OCI-LY7 (cell line): ENCODE measurements at regions of chr14 and their contacts with region 1.

Region 1: DNA sequence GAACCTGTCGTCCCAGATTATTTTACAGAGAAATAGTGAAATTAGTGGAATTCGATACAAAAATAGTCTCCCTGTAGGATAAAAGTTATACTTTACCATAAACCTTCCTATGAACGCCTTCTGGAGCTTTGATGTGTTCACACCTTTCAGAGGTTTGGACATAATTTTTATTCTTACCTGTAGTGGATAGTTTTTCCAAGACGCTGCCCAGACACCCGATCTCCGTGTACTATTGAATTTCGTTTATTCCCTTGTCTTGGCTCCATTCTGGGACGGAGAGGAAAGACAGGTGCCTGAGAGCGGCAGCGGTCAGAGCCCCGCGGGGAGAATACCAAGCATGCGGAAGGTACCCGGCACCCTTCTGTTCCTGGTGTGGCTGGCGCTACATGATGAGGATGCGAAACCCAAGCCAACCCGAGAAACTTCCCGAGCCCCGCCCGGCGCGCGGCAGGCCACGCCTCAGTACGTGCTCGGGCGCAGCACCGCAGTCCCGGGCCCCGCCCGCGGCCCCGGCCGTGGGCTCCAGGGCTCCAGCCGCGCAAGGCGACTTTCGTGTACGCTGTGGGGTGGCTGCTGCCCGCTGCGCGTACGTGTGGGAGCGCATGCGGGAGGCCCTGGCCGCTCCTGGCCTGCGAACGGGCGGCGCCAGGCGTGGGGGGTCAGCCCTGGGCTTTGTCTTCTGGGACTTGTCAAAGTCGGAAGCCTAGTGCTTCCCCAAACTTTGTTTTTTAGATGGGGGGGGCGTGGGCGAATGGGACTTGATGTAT is 11.3 kb upstream of the SNAPC1 start:
- DNase-seq: peak; percentile 92
- H3K4me3 ChIP-seq: peak overlapping the region; percentile 69
- H3K27ac ChIP-seq: peak overlapping the region; percentile 26
- H3K4me1 ChIP-seq: peaks cover 65% of the 10 kb centered on the region
- CTCF ChIP-seq: no peak

Region 2: GRCh38 chr14:61719344-61720293 is 31.3 kb before region 1 on chr14:
- CTCF ChIA-PET with region 1: no interaction called
- POLR2A ChIA-PET with region 1: interaction called, 15 read pairs
- intact Hi-C with region 1: no loop called
- DNase-seq: peak; percentile 63
- H3K4me3 ChIP-seq: peak overlapping the region; percentile 62
- H3K27ac ChIP-seq: peak overlapping the region; percentile 88
- H3K4me1 ChIP-seq: peaks cover 68% of the 10 kb centered on the region
- CTCF ChIP-seq: no peak

Region 3: GRCh38 chr14:61730756-61731373 is 20.0 kb before region 1 on chr14:
- CTCF ChIA-PET with region 1: interaction called, 3 read pairs
- POLR2A ChIA-PET with region 1: interaction called, 15 read pairs
- intact Hi-C with region 1: no loop called
- DNase-seq: peak; percentile 46
- H3K4me3 ChIP-seq: no peak overlapping the region
- H3K27ac ChIP-seq: peak overlapping the region; percentile 21
- H3K4me1 ChIP-seq: peaks cover 22% of the 10 kb centered on the region
- CTCF ChIP-seq: peak; percentile 93

Region 4: GRCh38 chr14:61737915-61738314 is 13.0 kb before region 1 on chr14:
- CTCF ChIA-PET with region 1: no interaction called
- POLR2A ChIA-PET with region 1: interaction called, 24 read pairs
- intact Hi-C with region 1: no loop called
- DNase-seq: no peak
- H3K4me3 ChIP-seq: no peak overlapping the region
- H3K27ac ChIP-seq: no peak overlapping the region
- H3K4me1 ChIP-seq: peaks cover 8% of the 10 kb centered on the region
- CTCF ChIP-seq: no peak

Region 5: GRCh38 chr14:61761959-61762786 is 11.3 kb after region 1 on chr14 and contains the start of gene SNAPC1:
- CTCF ChIA-PET with region 1: interaction called, 4 read pairs
- POLR2A ChIA-PET with region 1: interaction called, 55 read pairs
- intact Hi-C with region 1: no loop called
- DNase-seq: peak; percentile 100
- H3K4me3 ChIP-seq: peak within 1 kb of the TSS; percentile 92
- H3K27ac ChIP-seq: peak within 1 kb of the TSS; percentile 74
- H3K4me1 ChIP-seq: peaks cover 36% of the 10 kb centered on the region
- CTCF ChIP-seq: no peak
- total RNA-seq, gene SNAPC1: 10.5 and 11.7 TPM in 2 replicates

Region 6: DNA sequence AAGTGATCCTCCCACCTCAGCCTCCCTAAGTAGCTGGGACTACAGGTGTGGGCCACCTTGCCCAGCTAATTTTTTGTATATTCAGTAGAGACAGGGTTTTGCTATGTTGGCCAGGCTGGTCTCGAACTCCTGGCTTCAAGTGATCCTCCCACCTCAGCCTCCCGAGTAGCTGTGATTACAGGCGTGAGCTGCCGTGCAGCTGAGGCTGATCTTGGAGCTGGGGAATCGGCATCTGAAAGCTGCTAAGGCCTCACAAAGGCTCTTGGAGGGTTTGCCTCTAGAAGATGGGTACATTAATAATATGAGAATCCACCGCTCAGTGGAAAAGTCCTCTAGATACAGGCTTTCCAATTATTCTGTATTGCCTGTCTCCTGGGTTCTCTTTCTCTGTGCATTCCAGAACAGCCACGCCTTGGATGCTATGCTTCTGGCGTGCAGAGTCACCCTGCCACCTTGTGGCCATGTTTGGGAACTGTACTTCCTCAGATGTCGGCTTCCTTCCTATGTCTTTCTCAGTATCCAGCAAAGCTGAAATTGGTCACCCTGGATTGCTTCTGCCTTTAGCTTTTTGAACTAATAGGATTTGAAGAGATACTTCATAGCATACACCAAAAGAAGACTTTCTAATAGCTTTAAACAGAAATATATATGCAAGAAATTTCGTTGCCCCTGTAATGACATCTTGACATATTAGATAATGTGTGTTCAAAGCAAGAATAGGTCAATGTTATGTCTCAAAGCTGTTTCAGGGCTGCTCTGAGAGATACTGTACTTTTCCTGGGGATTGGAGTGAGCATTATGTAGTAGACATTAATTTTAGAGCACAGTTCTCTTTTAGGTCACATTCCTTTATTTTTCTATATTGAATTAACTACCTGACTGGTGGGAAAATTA is 86.7 kb after region 1 on chr14:
- CTCF ChIA-PET with region 1: interaction called, 3 read pairs
- POLR2A ChIA-PET with region 1: interaction called, 11 read pairs
- intact Hi-C with region 1: no loop called
- DNase-seq: peak; percentile 83
- H3K4me3 ChIP-seq: no peak overlapping the region
- H3K27ac ChIP-seq: no peak overlapping the region
- H3K4me1 ChIP-seq: peaks cover 6% of the 10 kb centered on the region
- CTCF ChIP-seq: peak; percentile 99